ENCODE measurements at regions of chr6 and their contacts with region 1.

Region 1: GRCh38 chr6:31652925-31653718 is 661 bp upstream of the BAG6 start:
- H3K4me3 ChIP-seq: peak overlapping the region; percentile 85
- H3K27ac ChIP-seq: peak overlapping the region; percentile 87
- H3K4me1 ChIP-seq: 0 out of 2 replicates have a peak, but pooled peaks cover 6% of the 10 kb centered on the region
- CTCF ChIP-seq: peak; percentile 35; the same call in 1 of the 2 replicates

Region 2: GRCh38 chr6:31042806-31043205 is 610.3 kb before region 1 on chr6:
- CTCF ChIA-PET with region 1: no interaction called
- POLR2A ChIA-PET with region 1: no interaction called
- H3K4me3 ChIP-seq: no peak overlapping the region
- H3K27ac ChIP-seq: no peak overlapping the region
- H3K4me1 ChIP-seq: no peaks in the 10 kb centered on the region
- CTCF ChIP-seq: no peak

Region 3: GRCh38 chr6:31619805-31620585 is 33.1 kb before region 1 on chr6:
- CTCF ChIA-PET with region 1: no interaction called
- POLR2A ChIA-PET with region 1: interaction called, 23 read pairs
- H3K4me3 ChIP-seq: peak overlapping the region; percentile 66
- H3K27ac ChIP-seq: peak overlapping the region; percentile 99
- H3K4me1 ChIP-seq: peaks cover 7% of the 10 kb centered on the region; the same call in 1 of the 2 replicates
- CTCF ChIP-seq: no peak

Region 4: DNA sequence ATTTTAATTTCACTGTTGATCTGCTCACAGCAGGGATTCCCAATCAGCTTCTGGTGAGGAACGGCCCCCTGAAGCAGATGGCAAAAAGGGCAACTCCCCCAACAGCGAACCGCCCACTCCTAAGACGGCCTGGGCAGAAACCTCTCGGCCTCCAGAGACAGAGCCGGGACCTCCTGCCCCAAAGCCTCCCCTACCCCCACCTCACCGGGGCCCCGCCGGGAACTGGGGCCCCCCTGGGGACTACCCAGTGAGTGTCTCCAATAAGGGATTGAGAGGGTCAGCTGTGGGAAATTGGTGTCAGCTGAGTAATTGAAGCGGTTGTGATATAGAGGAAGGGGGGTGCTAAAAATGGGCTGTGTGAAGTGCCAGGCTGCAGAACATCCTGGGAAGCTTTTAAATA is 26.2 kb before region 1 on chr6:
- CTCF ChIA-PET with region 1: interaction called, 10 read pairs
- POLR2A ChIA-PET with region 1: interaction called, 23 read pairs
- H3K4me3 ChIP-seq: no peak overlapping the region
- H3K27ac ChIP-seq: no peak overlapping the region
- H3K4me1 ChIP-seq: peaks cover 6% of the 10 kb centered on the region; the same call in 1 of the 2 replicates
- CTCF ChIP-seq: no peak

Region 5: DNA sequence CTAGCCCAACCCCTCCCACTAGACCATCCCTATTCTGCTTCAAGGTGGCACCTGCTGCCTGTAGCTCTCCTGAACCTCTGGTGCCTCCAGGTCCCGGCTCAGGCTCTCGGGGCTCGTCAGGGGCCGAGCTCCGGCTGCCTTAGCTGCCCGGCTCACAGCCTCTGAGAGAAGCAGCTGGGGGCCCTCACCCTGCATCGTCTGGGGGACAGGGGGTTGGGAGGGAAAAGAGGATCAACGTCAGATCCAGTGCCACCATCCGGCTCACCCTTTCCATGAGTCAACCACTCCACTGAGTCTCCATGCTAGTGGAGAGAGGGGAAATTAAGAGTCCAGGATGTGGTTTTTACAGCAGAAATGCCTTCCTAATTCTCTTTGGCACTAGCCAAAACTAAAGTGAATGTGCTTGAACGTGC is 13.7 kb before region 1 on chr6:
- CTCF ChIA-PET with region 1: interaction called, 3 read pairs
- POLR2A ChIA-PET with region 1: interaction called, 76 read pairs
- H3K4me3 ChIP-seq: no peak overlapping the region
- H3K27ac ChIP-seq: no peak overlapping the region; the same call in 1 of the 2 replicates
- H3K4me1 ChIP-seq: no peaks in the 10 kb centered on the region
- CTCF ChIP-seq: no peak

Region 6: GRCh38 chr6:31665501-31666336 is 12.6 kb after region 1 on chr6 and contains the start of gene CSNK2B:
- CTCF ChIA-PET with region 1: interaction called, 16 read pairs
- POLR2A ChIA-PET with region 1: interaction called, 180 read pairs
- H3K4me3 ChIP-seq: peak within 1 kb of the TSS; percentile 92
- H3K27ac ChIP-seq: peak within 1 kb of the TSS; percentile 92
- H3K4me1 ChIP-seq: peaks cover 6% of the 10 kb centered on the region; the same call in 1 of the 2 replicates
- CTCF ChIP-seq: peak; percentile 75

Region 7: DNA sequence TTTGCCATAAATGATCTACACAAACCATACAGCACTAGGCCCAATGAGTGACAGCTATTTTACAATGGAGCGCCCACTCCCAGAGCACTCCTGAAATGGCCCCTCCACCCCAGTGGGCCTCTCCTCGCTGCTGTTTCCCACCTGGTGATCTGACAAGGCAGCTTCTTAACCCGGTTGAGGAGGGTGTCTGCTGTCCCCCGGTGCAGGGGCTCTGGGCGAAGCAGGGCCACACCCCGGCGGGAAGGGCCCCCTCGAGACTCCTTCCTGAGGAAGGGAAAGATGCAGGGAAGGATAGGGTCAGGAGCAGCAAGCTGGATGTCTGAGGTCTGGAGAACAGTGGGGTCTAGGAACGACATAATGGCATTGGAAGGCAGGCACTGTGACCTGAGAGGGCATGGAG is 39.8 kb after region 1 on chr6:
- CTCF ChIA-PET with region 1: no interaction called
- POLR2A ChIA-PET with region 1: no interaction called
- H3K4me3 ChIP-seq: no peak overlapping the region
- H3K27ac ChIP-seq: no peak overlapping the region
- H3K4me1 ChIP-seq: no peaks in the 10 kb centered on the region
- CTCF ChIP-seq: no peak

Measured in HEK293 (cell line).